ENCODE measurements at regions of chr17 and their contacts with region 1.

Region 1: GRCh38 chr17:82648166-82648668 is at the start of gene WDR45B:
- DNase-seq: peak; percentile 94
- H3K4me3 Mint-ChIP-seq: peak within 1 kb of the TSS; percentile 79
- H3K27ac Mint-ChIP-seq: peak within 1 kb of the TSS; percentile 82
- H3K4me1 Mint-ChIP-seq: peaks cover 16% of the 10 kb centered on the region
- H3K27me3 Mint-ChIP-seq: no peaks in the 10 kb centered on the region
- CTCF ChIP-seq: no peak
- total RNA-seq, gene WDR45B: 87.3 and 88.3 TPM in 2 replicates

Region 2: GRCh38 chr17:82698065-82698973 is 50.1 kb after region 1 on chr17 and contains the start of gene RAB40B:
- CTCF ChIA-PET with region 1: no interaction called
- POLR2A ChIA-PET with region 1: interaction called, 3 read pairs
- intact Hi-C with region 1: loop called (anchors 5 kb)
- DNase-seq: peak; percentile 97
- H3K4me3 Mint-ChIP-seq: peak within 1 kb of the TSS; percentile 76
- H3K27ac Mint-ChIP-seq: no peak within 1 kb of the TSS
- H3K4me1 Mint-ChIP-seq: no peaks in the 10 kb centered on the region
- H3K27me3 Mint-ChIP-seq: no peaks in the 10 kb centered on the region
- CTCF ChIP-seq: no peak
- total RNA-seq, gene RAB40B: 5.9 and 6.3 TPM in 2 replicates

Region 3: DNA sequence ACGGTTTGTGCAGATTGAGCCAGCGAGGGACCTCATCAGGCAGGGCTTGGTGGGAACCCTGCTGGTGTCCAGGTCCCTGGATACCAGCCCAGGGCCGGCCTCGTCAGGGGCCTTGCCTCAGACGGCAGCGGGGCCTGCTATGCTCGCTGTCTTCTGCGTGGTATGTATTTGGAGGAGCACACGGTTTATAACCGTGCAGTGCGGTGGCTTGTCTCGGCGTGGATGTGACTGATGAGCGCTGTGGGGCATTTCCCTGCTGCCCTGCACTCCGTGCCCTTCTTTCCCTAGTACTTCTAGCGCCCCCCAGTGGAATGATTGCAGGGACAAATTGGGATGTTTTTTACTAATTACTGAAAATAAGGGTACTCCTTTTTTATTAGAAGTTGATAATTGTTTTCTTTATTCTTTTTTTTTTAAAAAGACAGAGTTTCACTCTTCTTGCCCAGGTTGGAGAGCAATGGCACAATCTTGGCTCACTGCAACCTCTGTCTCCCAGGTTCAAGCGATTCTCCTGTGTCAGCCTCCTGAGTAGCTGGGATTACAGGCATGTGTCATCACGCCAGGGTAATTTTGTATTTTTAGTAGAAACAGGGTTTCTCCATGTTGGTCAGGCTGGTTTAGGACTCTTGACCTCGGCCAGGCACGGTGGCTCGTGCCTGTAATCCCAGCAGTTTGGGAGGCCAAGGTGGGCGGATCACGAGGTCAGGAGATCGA is 119.0 kb after region 1 on chr17:
- CTCF ChIA-PET with region 1: no interaction called
- POLR2A ChIA-PET with region 1: no interaction called
- intact Hi-C with region 1: loop called (anchors 10 kb)
- DNase-seq: peak; percentile 60
- H3K4me3 Mint-ChIP-seq: no peak overlapping the region
- H3K27ac Mint-ChIP-seq: no peak overlapping the region
- H3K4me1 Mint-ChIP-seq: peaks cover 4% of the 10 kb centered on the region
- H3K27me3 Mint-ChIP-seq: no peaks in the 10 kb centered on the region
- CTCF ChIP-seq: peak; percentile 52

Region 4: GRCh38 chr17:82863941-82864774 is 215.9 kb after region 1 on chr17:
- CTCF ChIA-PET with region 1: no interaction called
- POLR2A ChIA-PET with region 1: no interaction called
- intact Hi-C with region 1: no loop called
- DNase-seq: peak; percentile 58
- H3K4me3 Mint-ChIP-seq: no peak overlapping the region
- H3K27ac Mint-ChIP-seq: no peak overlapping the region
- H3K4me1 Mint-ChIP-seq: peaks cover 10% of the 10 kb centered on the region
- H3K27me3 Mint-ChIP-seq: no peaks in the 10 kb centered on the region
- CTCF ChIP-seq: no peak

Measured in MCF 10A (cell line).